ENCODE measurements at regions of chr5 and their contacts with region 1.

Region 1: GRCh38 chr5:43959148-43959547 is 356.2 kb downstream of the NNT start:
- H3K4me3 Mint-ChIP-seq: no peak overlapping the region
- H3K27ac Mint-ChIP-seq: no peak overlapping the region
- H3K4me1 Mint-ChIP-seq: no peaks in the 10 kb centered on the region
- H3K27me3 Mint-ChIP-seq: no peaks in the 10 kb centered on the region

Region 2: DNA sequence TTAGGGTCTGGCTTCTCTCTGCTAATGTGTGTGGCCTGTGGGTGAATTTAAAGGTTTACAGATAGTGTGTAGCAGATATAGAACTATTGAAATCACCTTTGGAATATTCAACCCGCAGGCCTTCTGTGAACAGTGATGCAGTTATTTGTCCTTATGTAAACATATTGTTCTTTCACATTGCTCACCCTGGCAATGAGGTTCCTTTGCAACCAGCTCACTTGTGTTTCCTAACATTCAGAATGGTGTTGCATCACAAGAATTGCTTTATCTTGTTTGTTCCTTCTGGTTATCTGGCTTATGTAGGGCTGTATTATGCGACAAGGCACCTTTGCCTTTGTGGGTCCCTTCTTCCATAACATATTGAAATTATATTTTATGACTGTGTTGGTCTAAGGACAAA is 14.2 kb after region 1 on chr5:
- intact Hi-C with region 1: loop called (anchors 1 kb)
- H3K4me3 Mint-ChIP-seq: no peak overlapping the region
- H3K27ac Mint-ChIP-seq: no peak overlapping the region
- H3K4me1 Mint-ChIP-seq: no peaks in the 10 kb centered on the region
- H3K27me3 Mint-ChIP-seq: no peaks in the 10 kb centered on the region

Region 3: DNA sequence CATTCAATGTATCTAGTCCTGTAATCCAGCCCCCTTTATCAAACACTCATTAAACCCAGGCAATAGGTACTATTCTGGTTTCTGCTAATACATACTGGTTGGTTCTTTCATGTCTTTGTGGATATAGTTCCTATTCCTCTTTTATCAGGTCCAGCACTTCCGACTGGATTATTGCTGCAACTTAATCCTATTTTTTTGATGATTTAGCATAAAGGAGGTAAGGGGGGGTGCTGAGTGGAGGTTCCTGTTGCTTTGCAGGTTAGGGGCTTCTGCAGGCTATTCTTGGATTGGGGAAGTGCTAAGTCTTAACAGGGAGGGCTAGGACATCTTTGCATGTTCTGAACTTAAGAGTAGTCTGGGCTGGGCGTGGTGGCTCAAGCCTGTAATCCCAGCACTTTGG is 52.4 kb after region 1 on chr5:
- intact Hi-C with region 1: no loop called
- H3K4me3 Mint-ChIP-seq: no peak overlapping the region
- H3K27ac Mint-ChIP-seq: no peak overlapping the region
- H3K4me1 Mint-ChIP-seq: no peaks in the 10 kb centered on the region
- H3K27me3 Mint-ChIP-seq: no peaks in the 10 kb centered on the region

Measured in dendritic cell treated with granulocyte-macrophage colony-stimulating factor and Interleukin-4, amounts not matched to agents 40 ng/mL and 50 ng/mL, for 4 days (primary cell).